ENCODE measurements at regions of chr11 and their contacts with region 1.

Region 1: GRCh38 chr11:98423933-98424332 is 596.8 kb upstream of the CNTN5 start:
- DNase-seq: no peak
- ATAC-seq: no peak
- H3K4me3 ChIP-seq: no peak overlapping the region
- H3K27ac ChIP-seq: no peak overlapping the region
- H3K4me1 ChIP-seq: no peaks in the 10 kb centered on the region
- H3K27me3 ChIP-seq: no peaks in the 10 kb centered on the region
- CTCF ChIP-seq: no peak

Region 2: GRCh38 chr11:98409069-98409468 is 14.9 kb before region 1 on chr11:
- CTCF ChIA-PET with region 1: no interaction called
- POLR2A ChIA-PET with region 1: no interaction called
- intact Hi-C with region 1: loop called (anchors 1 kb)
- DNase-seq: no peak
- ATAC-seq: no peak
- H3K4me3 ChIP-seq: no peak overlapping the region
- H3K27ac ChIP-seq: no peak overlapping the region
- H3K4me1 ChIP-seq: no peaks in the 10 kb centered on the region; the same call in 1 of the 2 replicates
- H3K27me3 ChIP-seq: peaks cover 9% of the 10 kb centered on the region; the same call in 1 of the 2 replicates
- CTCF ChIP-seq: no peak